ENCODE measurements at regions of chr19 and their contacts with region 1.

Region 1: GRCh38 chr19:45439569-45440254 is 16.0 kb upstream of the ERCC1 start:
- DNase-seq: peak; percentile 75 to 95 (median 86)
- ATAC-seq: peak; percentile 72
- H3K4me3 ChIP-seq: peak overlapping the region; percentile 57
- H3K4me3 Mint-ChIP-seq: peak overlapping the region; percentile 68 to 83 (median 77)
- H3K27ac ChIP-seq: peak overlapping the region; percentile 69
- H3K27ac Mint-ChIP-seq: peak overlapping the region in 4 of 9 donors; percentile 51 to 91 (median 74)
- H3K4me1 ChIP-seq: peaks cover 24% of the 10 kb centered on the region in 2 donors
- H3K4me1 Mint-ChIP-seq: peaks cover 26 to 35% (median 33%) of the 10 kb centered on the region in 7 donors
- H3K27me3 ChIP-seq: no peaks in the 10 kb centered on the region
- H3K27me3 Mint-ChIP-seq: peaks cover 0 to 5% (median 0%) of the 10 kb centered on the region in 5 donors

Region 2: DNA sequence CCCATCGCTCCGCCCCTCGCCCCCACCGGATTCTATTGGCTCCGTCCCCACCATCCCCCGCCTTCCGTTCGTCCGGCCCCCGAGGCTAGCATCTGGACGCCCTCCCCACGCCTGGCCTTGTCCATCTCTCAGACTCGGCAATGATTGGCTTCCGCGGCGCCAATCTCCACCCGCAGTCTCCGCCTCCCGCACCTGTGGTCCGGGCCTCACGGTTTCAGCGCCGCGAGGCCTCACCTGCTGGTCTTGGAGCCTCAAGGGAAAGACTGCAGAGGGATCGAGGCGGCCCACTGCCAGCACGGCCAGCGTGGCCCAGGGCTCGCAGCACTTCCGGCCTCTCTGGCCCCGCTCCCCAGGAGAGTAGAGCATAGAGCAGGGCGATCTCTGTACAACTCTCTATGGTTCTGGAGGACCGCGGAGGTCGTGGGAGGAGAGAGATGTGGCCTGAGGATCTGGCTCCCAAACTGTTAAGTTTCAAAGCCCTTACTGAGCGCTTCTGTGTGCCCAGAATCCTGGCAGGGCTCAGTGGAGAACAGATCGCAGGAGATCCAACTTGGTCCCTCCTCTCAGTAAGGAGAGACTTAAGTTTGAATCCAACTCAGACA is 16.0 kb before region 1 on chr19 and contains the start of gene ERCC1:
- CTCF ChIA-PET with region 1: interaction called, 5 read pairs
- POLR2A ChIA-PET with region 1: interaction called, 3 read pairs
- intact Hi-C with region 1: loop called in 1 of 2 experiments (anchors 1 kb)
- DNase-seq: peak in 7 of 9 donors; percentile 25 to 83 (median 52)
- ATAC-seq: peak; percentile 71
- H3K4me3 ChIP-seq: peak within 1 kb of the TSS; percentile 72
- H3K4me3 Mint-ChIP-seq: peak within 1 kb of the TSS; percentile 88 to 100 (median 94)
- H3K27ac ChIP-seq: peak within 1 kb of the TSS; percentile 77
- H3K27ac Mint-ChIP-seq: peak within 1 kb of the TSS; percentile 83 to 97 (median 91)
- H3K4me1 ChIP-seq: peaks cover 24 to 28% of the 10 kb centered on the region in 2 donors
- H3K4me1 Mint-ChIP-seq: peaks cover 22 to 57% (median 50%) of the 10 kb centered on the region in 7 donors
- H3K27me3 ChIP-seq: peaks cover 0 to 3% of the 10 kb centered on the region in 2 donors
- H3K27me3 Mint-ChIP-seq: peaks cover 0 to 10% (median 3%) of the 10 kb centered on the region in 5 donors
- total RNA-seq, gene ERCC1: 45.1 to 88.2 (median 53.4) TPM

Region 3: GRCh38 chr19:45455707-45456499 is 16.2 kb after region 1 on chr19:
- CTCF ChIA-PET with region 1: interaction called, 3 read pairs
- POLR2A ChIA-PET with region 1: interaction called, 5 read pairs
- intact Hi-C with region 1: loop called in 1 of 2 experiments (anchors 1 kb)
- DNase-seq: peak in 3 of 9 donors; percentile 23 to 70 (median 58)
- ATAC-seq: peak; percentile 74
- H3K4me3 ChIP-seq: no peak overlapping the region
- H3K4me3 Mint-ChIP-seq: peak overlapping the region in 6 of 10 donors; percentile 16 to 49 (median 32)
- H3K27ac ChIP-seq: no peak overlapping the region
- H3K27ac Mint-ChIP-seq: peak overlapping the region in 6 of 9 donors; percentile 14 to 84 (median 56)
- H3K4me1 ChIP-seq: peaks cover 17 to 30% of the 10 kb centered on the region in 2 donors
- H3K4me1 Mint-ChIP-seq: peaks cover 26 to 39% (median 31%) of the 10 kb centered on the region in 7 donors
- H3K27me3 ChIP-seq: no peaks in the 10 kb centered on the region
- H3K27me3 Mint-ChIP-seq: peaks cover 0 to 39% (median 0%) of the 10 kb centered on the region in 5 donors

Region 4: DNA sequence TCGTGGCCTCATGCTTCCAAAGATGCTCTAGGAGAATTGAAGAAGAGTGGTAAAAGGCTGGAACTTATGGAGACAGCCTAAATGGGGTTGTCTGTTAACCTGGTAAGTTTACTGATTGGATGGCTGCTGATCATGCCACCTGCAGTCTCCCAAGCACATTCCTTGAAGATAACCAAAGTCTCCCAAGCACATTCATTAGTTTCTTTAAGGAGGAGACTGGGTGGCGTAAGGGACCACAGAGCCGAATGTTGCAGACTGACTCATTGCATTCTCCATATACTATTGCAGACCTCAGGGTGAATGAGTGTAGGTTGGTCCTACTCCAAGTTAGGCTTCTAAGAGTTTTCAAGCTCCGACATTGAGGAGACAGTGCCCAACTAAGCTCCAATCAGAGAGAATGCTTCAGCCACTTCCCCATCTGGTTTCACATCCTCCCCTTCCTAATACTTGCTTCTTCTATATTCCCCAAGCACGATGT is 685.0 kb after region 1 on chr19 and contains the start of gene IGFL3:
- CTCF ChIA-PET with region 1: no interaction called
- POLR2A ChIA-PET with region 1: no interaction called
- intact Hi-C with region 1: no loop called
- DNase-seq: no peak
- ATAC-seq: no peak
- H3K4me3 ChIP-seq: no peak within 1 kb of the TSS
- H3K4me3 Mint-ChIP-seq: no peak within 1 kb of the TSS
- H3K27ac ChIP-seq: no peak within 1 kb of the TSS
- H3K27ac Mint-ChIP-seq: peak within 1 kb of the TSS in 1 of 9 donors; percentile 11
- H3K4me1 ChIP-seq: no peaks in the 10 kb centered on the region
- H3K4me1 Mint-ChIP-seq: peaks cover 0 to 1% (median 0%) of the 10 kb centered on the region in 7 donors
- H3K27me3 ChIP-seq: no peaks in the 10 kb centered on the region
- H3K27me3 Mint-ChIP-seq: peaks cover 36 to 56% (median 54%) of the 10 kb centered on the region in 5 donors
- total RNA-seq, gene IGFL3: not detected

Measured in naive thymus-derived CD4-positive, alpha-beta T cell (primary cell).